ENCODE measurements at regions of chrX and their contacts with region 1.

Region 1: DNA sequence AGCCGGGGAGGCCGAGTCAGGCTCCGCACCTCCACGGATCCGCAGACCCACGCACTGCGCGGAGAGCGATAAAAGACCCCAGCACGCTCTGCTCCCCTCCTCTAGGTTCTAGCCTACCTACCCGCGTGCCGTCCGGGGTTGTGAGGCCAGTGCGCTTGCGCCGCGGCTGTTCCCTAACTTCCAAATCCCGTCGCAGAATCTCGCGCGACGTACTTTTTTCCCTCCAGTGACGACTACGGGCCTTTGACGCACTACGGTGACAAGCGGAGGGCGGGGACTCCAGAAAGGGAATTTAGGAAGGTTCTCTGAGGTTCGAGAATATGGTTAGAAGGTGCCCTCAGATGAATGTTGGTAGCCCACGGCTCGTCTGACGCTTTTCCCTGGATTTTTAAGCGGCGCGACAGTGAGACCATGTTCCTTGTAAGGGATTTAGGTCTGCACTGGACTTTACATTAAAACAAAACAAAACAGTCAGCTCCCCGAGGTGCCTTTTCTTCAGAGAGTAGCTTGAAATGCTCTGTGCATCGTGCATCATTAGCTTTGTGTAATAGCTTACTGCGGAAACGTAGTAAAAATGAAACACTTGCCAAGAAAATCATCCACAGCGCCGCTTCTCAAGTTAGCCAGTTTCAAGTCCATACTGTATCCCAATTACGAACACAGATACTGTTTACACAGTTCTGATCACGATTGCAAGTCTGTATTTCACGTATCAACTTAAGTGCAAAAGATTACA is at the start of gene NKRF:
- DNase-seq: peak; percentile 96
- H3K4me3 Mint-ChIP-seq: peak within 1 kb of the TSS; percentile 99
- H3K27ac Mint-ChIP-seq: peak within 1 kb of the TSS; percentile 95
- H3K4me1 Mint-ChIP-seq: peaks cover 20% of the 10 kb centered on the region
- H3K27me3 Mint-ChIP-seq: no peaks in the 10 kb centered on the region
- total RNA-seq, gene NKRF: 28.0 and 29.8 TPM in 2 replicates

Region 2: GRCh38 chrX:119482481-119483480 is 123.7 kb before region 1 on chrX:
- intact Hi-C with region 1: loop called (anchors 10 kb)
- DNase-seq: peak; percentile 90
- H3K4me3 Mint-ChIP-seq: peak overlapping the region; percentile 74
- H3K27ac Mint-ChIP-seq: peak overlapping the region; percentile 79
- H3K4me1 Mint-ChIP-seq: peaks cover 6% of the 10 kb centered on the region
- H3K27me3 Mint-ChIP-seq: no peaks in the 10 kb centered on the region

Region 3: DNA sequence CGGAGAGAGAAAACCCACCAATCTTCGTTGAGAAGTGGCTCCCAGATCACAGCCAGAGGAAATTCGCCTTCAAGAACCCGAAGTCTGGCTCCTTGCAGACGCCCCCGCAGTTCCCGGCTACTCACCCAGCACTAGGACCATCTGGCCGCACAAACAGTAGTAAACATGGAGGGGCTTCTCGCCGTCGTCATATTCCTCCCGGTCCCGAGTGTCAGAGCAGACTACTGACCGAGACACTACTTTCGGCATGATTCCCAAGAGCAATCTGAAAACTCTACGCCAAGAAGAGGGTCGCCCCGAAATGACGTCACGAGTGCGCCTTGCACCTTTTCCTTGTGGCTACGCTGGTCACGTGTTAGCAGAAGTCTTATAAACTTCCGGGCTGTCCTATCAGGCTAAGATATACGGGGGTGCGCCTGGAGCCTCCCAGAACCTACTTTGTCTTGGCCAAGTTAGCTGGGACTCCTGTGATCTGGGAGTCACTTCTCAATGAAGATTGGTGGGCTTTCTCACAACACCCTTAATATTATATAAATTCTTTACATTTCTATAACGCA is 41.3 kb before region 1 on chrX and contains the start of gene STEEP1:
- intact Hi-C with region 1: no loop called
- DNase-seq: peak; percentile 96
- H3K4me3 Mint-ChIP-seq: peak within 1 kb of the TSS; percentile 94
- H3K27ac Mint-ChIP-seq: peak within 1 kb of the TSS; percentile 94
- H3K4me1 Mint-ChIP-seq: peaks cover 13% of the 10 kb centered on the region
- H3K27me3 Mint-ChIP-seq: peaks cover 1% of the 10 kb centered on the region
- total RNA-seq, gene STEEP1: 24.4 and 25.4 TPM in 2 replicates

Region 4: DNA sequence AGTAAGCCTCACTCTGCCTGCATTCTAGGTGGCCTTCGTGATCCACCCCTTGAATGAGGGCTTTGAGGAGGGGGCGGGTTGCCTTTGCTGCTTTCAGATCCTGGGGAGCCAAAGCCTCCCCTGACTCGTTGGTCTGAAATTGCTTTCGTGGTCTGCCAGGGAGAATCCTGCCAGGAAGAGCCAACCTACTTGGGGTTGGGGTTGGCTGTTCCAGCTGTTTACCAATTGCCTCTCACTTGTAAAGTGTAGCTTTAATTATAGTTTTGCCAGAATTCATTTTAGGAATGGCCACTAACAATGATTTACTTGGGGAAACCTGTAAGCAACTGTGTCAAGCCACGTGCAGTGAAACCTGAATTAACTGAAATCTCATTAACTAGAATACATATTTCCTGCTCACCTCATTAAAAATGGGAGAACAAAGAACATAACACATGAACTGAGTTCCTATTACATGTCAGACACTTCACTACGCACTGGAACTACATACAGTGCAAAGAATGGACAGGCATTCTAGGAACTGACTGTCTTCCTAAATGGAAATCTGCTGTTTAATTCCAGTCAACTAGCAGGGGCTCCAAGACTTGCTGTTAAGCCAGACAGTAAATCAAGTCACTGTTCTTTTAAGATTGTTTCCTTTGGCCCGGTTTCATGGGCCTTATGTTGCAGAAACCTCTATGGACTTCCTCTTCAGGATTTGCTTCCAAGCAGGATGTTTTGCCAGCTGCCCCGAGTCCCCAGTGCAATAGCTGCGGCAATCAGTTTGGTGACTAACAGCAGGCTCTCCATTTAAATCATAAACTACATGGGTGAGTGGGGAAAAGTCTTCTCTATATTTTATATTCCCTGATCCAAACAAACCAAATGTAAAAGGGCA is 16.1 kb after region 1 on chrX:
- intact Hi-C with region 1: no loop called
- DNase-seq: no peak
- H3K4me3 Mint-ChIP-seq: no peak overlapping the region
- H3K27ac Mint-ChIP-seq: no peak overlapping the region
- H3K4me1 Mint-ChIP-seq: no peaks in the 10 kb centered on the region
- H3K27me3 Mint-ChIP-seq: no peaks in the 10 kb centered on the region

Region 5: GRCh38 chrX:119655125-119655524 is 48.7 kb after region 1 on chrX:
- intact Hi-C with region 1: loop called (anchors 2 kb)
- DNase-seq: peak; percentile 80
- H3K4me3 Mint-ChIP-seq: peak overlapping the region; percentile 66
- H3K27ac Mint-ChIP-seq: peak overlapping the region; percentile 94
- H3K4me1 Mint-ChIP-seq: peaks cover 33% of the 10 kb centered on the region
- H3K27me3 Mint-ChIP-seq: no peaks in the 10 kb centered on the region

Region 6: DNA sequence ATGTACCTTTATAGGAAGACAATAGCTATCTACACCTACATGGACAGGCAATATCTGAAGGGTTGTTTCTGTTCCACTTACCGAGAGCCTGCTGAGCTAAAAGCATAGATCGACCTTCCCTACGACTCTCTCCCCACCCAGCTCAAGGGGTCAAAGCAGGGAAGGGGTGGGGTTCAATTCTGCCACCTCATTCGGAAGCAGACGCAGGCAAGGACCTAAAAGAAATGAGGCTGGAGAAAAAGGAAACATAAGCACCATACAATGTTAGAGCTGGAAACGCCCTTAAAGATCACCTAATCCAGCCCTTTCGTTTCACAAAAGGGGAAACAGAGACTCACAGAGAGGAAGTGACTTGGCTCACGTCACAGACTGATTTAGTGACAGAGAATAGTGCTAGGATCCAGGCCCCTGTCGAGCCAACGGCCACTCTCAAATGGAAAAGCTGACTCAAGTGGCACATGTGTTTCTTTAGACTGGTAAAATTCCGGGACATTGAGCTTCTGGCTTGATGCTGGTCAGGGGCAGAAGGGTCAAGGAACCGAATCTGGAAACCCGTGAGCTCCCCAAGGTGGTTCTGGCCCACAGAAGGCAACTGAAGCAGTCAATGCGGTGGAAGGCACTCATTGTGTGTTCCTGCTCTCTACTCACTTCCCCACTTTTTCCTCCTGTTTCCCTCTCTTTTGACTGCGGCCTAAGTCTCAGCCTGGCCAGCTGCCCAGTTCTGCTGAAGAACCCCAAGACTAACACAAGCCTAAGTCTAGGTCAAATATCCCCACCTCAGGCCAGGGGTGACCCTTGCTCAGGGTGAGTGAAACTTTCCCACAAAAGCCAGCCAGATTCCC is 79.0 kb after region 1 on chrX:
- intact Hi-C with region 1: loop called (anchors 2 kb)
- DNase-seq: peak; percentile 85
- H3K4me3 Mint-ChIP-seq: peak overlapping the region; percentile 96
- H3K27ac Mint-ChIP-seq: peak overlapping the region; percentile 99
- H3K4me1 Mint-ChIP-seq: peaks cover 51% of the 10 kb centered on the region
- H3K27me3 Mint-ChIP-seq: no peaks in the 10 kb centered on the region

Region 7: GRCh38 chrX:119729408-119730201 is 123.2 kb after region 1 on chrX:
- intact Hi-C with region 1: loop called (anchors 5 kb)
- DNase-seq: peak; percentile 88
- H3K4me3 Mint-ChIP-seq: no peak overlapping the region
- H3K27ac Mint-ChIP-seq: no peak overlapping the region
- H3K4me1 Mint-ChIP-seq: peaks cover 5% of the 10 kb centered on the region
- H3K27me3 Mint-ChIP-seq: no peaks in the 10 kb centered on the region

Measured in activated CD4-positive, alpha-beta T cell treated with anti-CD3 and anti-CD28 coated beads, Interleukin-2, amount 10 ng/mL, durations not matched to agents 24 days and 14 days (primary cell).